GM13977 (cell line): ENCODE measurements at regions of chr12 and their contacts with region 1.

Region 1: DNA sequence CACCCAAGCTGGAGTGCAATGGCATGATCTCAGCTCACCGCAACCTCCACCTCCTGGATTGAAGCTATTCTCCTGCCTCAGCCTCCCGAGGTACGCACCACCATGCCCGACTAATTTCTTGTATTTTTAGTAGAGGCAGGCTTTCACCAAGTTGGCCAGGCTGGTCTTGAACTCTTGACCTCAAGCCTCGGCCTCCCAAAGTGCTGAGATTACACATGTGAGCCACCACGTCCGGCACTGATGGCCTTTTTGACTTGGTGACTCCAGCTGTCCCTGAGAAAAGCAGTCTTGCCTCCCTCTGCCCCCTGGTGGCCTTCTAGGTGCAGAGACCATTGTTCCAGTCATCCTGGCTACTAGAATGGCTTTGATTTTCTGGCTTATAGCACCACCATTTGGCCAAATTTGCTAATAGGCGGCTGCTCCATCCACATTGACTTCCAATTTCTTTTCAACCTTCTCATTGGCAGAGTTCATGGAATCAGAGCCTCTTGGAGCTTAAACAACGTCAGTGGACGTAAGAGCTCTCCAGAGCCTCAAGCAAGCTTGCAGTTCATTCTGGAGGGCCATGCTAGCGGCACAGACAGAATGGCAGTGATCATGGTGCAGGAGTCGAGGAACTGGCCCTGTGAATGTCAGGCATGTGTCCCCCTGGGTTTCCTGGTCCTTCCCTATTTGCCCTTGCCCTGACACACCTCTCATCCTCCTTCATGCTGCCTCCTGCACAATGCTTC is 25.4 kb upstream of the EIF4B start:
- DNase-seq: peak; percentile 85
- CTCF ChIP-seq: peak; percentile 99

Region 2: DNA sequence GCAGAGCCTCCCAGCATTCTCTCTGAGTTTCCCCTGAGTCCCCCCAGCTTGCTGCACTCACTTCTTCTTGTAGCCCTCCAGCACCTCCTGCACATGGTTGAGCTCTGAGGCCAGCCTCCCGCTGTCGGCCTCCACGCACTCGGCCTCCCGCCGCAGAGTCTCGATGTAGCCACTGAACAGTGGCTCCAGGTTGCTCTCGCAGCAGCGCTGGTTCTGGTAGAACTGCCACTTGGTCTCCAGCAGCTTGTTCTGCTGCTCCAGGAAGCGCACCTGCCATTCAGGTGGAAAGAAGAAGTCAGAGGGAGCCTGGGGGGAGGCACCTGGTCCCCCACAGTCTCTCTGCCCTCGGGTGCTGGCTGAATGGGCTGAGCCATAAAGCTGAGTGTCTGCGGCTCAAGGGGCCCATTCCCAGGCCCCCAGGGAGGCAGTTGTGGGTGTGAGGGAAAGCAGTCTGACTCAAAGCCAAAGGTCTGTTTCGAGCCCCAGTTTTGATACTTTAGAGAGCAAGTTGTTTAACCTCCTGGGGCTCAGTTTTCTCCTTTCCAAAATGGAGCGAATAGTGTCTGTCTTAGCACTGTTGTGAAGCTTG is 615.9 kb before region 1 on chr12:
- in situ Hi-C with region 1: no loop called
- DNase-seq: no peak
- CTCF ChIP-seq: no peak

Region 3: DNA sequence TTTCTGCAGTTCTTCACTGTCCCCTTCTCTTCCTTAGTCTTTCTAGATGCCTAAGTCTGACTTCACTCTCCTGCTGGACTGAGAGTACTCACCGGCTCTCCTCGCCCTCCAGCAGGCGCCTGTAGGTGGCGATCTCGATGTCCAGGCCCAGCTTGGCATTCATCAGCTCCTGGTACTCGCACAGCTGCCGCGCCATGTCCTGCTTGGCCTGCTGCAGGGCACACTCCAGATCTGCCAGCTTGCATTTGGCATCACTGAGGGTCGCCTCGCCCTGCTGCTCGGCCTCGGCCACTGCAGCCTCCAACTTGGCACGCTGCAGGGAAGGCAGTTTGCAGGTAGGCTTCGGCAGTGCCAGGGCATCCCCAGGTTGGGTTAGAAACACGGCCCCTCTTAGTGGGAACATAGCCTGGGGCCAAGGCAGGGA is 600.6 kb before region 1 on chr12:
- in situ Hi-C with region 1: loop called (anchors 25 kb)
- DNase-seq: no peak
- CTCF ChIP-seq: peak; percentile 40

Region 4: GRCh38 chr12:52582971-52583456 is 397.8 kb before region 1 on chr12:
- in situ Hi-C with region 1: loop called (anchors 25 kb)
- DNase-seq: peak; percentile 75
- CTCF ChIP-seq: peak; percentile 66

Region 5: GRCh38 chr12:52884526-52885293 is 96.1 kb before region 1 on chr12:
- in situ Hi-C with region 1: loop called (anchors 5 kb)
- DNase-seq: peak; percentile 83
- CTCF ChIP-seq: peak; percentile 83

Region 6: DNA sequence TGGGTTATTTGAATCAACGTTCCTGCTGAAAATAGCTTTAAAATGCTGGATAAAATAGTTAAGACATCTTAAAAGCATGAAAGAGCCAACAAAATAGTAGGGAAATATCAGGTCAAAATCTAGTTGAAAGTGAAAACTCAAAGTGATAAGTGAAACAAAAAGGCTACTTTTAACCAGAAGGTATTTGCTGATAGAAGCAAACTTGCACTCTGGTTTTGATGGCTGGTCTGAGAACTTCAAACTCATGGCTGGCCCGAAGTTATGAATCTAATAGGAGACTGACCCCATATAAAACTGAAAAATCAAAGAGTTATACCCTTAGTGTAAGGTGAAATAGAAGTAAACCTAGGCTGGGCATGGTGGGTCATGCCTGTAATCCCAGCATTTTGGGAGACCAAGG is 891.5 kb after region 1 on chr12:
- in situ Hi-C with region 1: no loop called
- DNase-seq: no peak
- CTCF ChIP-seq: no peak